ENCODE measurements at regions of chr14 and their contacts with region 1.

Region 1: GRCh38 chr14:65156568-65157366 is 54.5 kb upstream of the MAX start:
- DNase-seq: no peak
- H3K4me3 ChIP-seq: no peak overlapping the region
- H3K27ac ChIP-seq: peak overlapping the region; percentile 4 to 75
- H3K4me1 ChIP-seq: no peaks in the 10 kb centered on the region
- H3K27me3 ChIP-seq: no peaks in the 10 kb centered on the region
- CTCF ChIP-seq: no peak
- POLR2A ChIP-seq: no peak

Region 2: GRCh38 chr14:65102441-65103149 is 54.2 kb before region 1 on chr14 and contains the start of gene MAX:
- intact Hi-C with region 1: loop called (anchors 5 kb)
- DNase-seq: peak; percentile 99
- H3K4me3 ChIP-seq: peak within 1 kb of the TSS; percentile 91 to 96
- H3K27ac ChIP-seq: peak within 1 kb of the TSS; percentile 86 to 90
- H3K4me1 ChIP-seq: peaks cover 8% of the 10 kb centered on the region
- H3K27me3 ChIP-seq: no peaks in the 10 kb centered on the region
- CTCF ChIP-seq: no peak
- POLR2A ChIP-seq: peak; percentile 93
- total RNA-seq, gene MAX: 73.2 to 79.0 TPM

Region 3: GRCh38 chr14:65412032-65412846 is 255.5 kb after region 1 on chr14 and contains the start of gene FUT8:
- intact Hi-C with region 1: loop called (anchors 5 kb)
- DNase-seq: peak; percentile 95
- H3K4me3 ChIP-seq: peak within 1 kb of the TSS; percentile 61 to 81
- H3K27ac ChIP-seq: peak within 1 kb of the TSS; percentile 86 to 91
- H3K4me1 ChIP-seq: no peaks in the 10 kb centered on the region
- H3K27me3 ChIP-seq: no peaks in the 10 kb centered on the region
- CTCF ChIP-seq: peak in 3 of 4 experiments; percentile 65 to 81 (median 68)
- POLR2A ChIP-seq: peak; percentile 80
- total RNA-seq, gene FUT8: 12.4 to 27.9 TPM

Measured in prostate gland (tissue), 2 donors.